ENCODE measurements at regions of chr2 and their contacts with region 1.

Region 1: GRCh38 chr2:62774555-62775366 is 69.2 kb downstream of the EHBP1 start:
- DNase-seq: peak; percentile 17
- CTCF ChIP-seq: peak; percentile 68

Region 2: DNA sequence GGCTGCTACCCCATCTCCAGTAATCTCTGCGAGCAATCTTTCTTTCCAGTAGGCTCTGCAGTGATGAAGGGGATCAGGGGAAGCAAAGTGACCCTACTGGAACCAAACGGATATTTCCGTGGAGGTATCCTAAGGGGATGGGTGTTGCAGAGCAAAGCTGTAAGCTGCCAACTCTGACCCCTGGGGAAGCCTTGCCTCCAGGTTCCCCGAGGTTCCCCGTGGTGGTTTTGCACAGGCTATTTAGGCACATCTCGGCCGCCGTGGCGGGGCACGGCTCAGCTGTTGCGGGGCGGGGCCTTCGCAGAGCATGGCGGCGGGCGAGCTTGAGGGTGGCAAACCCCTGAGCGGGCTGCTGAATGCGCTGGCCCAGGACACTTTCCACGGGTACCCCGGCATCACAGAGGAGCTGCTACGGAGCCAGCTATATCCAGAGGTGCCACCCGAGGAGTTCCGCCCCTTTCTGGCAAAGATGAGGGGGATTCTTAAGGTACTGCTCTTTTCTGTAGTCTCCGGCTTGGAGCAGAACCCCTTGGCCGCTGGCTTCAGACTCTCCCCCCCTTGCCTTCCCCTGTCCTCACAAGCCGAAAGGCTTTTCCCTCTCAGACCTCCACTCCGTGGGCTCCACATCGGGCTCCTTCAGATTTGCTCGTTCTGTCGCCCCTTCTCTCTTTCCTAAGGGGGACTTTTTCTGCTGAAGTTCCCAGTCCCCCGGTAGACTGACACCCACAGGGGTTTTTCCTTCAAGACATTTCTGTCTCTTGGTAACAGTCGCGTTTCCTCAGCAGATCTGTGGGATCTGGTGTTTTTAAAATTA is 869.2 kb before region 1 on chr2 and contains the start of gene COMMD1:
- in situ Hi-C with region 1: loop called (anchors 25 kb)
- DNase-seq: peak; percentile 74
- CTCF ChIP-seq: no peak

Region 3: GRCh38 chr2:62234755-62235655 is 539.8 kb before region 1 on chr2:
- in situ Hi-C with region 1: no loop called
- DNase-seq: no peak
- CTCF ChIP-seq: no peak

Region 4: DNA sequence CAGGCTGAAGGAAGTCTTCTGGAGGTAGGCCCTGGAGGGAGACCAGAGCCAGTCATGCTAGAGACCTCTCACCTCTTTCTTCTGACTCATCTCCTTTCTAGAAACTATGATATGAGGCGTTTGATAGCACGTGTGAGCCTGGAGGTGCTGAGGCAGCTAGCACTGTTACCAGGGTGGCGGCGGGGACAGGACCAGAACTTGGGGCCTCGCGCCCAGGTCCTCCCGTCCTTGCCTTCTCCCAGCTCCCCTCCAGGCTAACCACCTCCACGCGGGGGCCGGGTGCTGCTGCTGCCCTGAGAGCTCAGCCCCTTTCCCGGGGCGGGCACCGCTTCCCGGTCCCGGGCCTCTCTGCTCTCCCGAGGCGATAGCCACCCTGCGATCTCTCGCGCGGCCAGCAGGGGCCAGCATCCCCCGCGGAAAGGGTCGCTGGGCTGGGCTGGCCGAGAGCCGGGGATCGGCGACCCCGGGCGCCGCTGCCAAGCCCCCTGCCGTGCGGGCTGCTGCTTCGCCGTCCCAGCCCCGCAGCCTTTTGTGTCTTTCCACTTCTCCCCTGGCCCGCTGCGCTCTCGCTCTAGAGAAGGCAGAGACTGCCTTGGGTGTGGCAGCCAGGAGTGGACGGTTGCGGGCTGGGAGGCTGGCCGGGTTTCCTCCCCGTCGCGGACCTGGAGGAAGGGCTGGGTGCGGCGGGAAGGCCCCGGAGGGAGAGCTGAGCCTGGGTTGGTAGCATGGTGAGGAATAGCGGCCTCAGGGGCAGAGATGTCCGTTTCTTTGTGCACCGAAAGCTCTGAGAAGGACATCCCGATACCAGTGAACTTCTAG is 317.8 kb before region 1 on chr2:
- in situ Hi-C with region 1: loop called (anchors 5 kb)
- DNase-seq: peak; percentile 87
- CTCF ChIP-seq: peak; percentile 97

Region 5: DNA sequence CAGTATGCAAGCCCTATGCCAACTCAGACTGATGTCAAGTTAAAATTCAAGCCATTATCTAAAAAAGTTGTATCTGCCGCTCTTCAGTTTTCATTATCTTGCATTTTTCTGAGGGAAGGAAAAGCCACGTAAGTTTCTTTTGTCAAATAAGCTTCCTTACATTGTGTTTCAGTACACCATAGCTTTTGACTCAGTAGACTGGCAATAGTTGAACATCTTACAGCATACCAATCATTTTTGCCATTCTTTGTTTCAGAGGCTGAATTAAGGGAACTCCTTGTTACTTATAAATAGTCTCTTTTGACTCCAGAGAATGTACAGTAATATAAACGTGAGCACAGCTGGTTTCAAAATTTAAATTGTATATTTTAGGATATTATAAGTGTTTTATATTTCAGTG is 51.4 kb after region 1 on chr2:
- in situ Hi-C with region 1: no loop called
- DNase-seq: no peak
- CTCF ChIP-seq: no peak

Region 6: DNA sequence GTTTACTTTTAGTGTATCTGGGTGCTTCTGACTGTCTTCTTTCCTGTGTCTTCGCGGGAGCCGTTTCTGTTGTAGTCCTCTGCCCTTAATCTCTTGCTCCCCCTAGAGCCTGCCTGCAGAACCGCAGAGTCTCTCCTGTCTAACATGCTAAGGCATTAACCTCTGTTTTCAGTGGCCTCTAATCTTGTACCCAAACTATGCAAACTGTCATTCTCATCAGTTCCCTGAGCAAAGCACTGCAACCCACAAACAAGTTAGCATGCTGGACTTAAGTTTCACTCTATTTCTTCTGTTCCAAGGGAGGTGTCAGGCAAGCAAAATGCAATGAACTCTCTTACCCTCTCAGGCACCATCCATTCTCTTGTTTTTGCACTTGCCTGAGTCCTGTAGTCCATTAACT is 414.3 kb after region 1 on chr2:
- in situ Hi-C with region 1: loop called (anchors 25 kb)
- DNase-seq: peak; percentile 40
- CTCF ChIP-seq: peak; percentile 78

Measured in GM13977 (cell line).